CD4-positive, alpha-beta memory T cell (primary cell): ENCODE measurements at regions of chr11 and their contacts with region 1.

Region 1: DNA sequence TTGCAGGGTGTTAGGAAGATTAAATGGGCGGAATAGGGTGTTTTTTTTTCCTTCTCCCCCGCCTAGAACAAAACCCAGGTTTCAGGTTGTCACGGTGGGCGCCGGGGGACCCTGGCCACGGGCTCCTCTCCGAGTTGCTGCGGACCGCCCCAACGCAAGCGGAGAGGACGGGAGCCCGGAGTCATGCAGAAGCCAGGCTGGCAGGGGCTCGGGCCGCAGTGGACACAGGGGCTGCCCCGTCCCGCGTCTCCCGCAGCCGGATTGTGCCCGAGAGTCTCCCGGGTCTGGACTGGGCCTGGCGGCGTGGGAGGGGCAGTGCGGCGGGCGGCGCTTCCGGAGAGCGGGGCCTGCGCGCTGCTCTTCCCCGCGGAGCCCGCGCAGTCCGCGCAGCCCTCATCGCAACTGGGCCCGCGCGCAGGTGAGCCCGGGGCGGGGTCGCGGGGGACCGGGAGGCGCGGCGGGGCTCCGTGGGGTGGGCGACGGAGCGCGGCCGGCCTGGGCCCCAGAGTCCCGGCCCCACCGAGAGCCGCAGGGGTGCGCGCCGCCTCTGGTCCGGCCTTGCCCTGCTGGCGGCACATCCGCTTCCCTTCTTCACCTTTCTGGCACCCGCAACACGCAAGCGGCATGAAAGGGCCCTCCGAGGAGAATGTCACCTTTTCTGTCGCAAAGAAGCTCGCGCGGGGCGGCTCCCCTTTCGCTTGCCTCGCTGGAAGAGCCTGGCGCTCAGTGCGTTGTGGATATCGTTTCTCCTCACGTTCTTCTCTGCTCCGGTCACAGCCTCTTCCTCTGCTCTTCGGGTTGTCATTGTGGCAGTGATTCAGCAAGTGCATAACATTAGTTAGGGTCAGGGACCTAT is at the start of gene TIRAP:
- DNase-seq: peak; percentile 75 to 81 (median 77)
- H3K4me3 ChIP-seq: peak within 1 kb of the TSS; percentile 83 to 98
- H3K4me3 Mint-ChIP-seq: peak within 1 kb of the TSS; percentile 90 to 99 (median 96)
- H3K27ac ChIP-seq: peak within 1 kb of the TSS; percentile 77
- H3K27ac Mint-ChIP-seq: peak within 1 kb of the TSS; percentile 86 to 99 (median 98)
- H3K4me1 ChIP-seq: peaks cover 43% of the 10 kb centered on the region
- H3K4me1 Mint-ChIP-seq: peaks cover 30 to 63% (median 47%) of the 10 kb centered on the region in 4 donors
- H3K27me3 ChIP-seq: no peaks in the 10 kb centered on the region
- H3K27me3 Mint-ChIP-seq: no peaks in the 10 kb centered on the region
- total RNA-seq, gene TIRAP: 25.4 to 27.4 TPM

Region 2: DNA sequence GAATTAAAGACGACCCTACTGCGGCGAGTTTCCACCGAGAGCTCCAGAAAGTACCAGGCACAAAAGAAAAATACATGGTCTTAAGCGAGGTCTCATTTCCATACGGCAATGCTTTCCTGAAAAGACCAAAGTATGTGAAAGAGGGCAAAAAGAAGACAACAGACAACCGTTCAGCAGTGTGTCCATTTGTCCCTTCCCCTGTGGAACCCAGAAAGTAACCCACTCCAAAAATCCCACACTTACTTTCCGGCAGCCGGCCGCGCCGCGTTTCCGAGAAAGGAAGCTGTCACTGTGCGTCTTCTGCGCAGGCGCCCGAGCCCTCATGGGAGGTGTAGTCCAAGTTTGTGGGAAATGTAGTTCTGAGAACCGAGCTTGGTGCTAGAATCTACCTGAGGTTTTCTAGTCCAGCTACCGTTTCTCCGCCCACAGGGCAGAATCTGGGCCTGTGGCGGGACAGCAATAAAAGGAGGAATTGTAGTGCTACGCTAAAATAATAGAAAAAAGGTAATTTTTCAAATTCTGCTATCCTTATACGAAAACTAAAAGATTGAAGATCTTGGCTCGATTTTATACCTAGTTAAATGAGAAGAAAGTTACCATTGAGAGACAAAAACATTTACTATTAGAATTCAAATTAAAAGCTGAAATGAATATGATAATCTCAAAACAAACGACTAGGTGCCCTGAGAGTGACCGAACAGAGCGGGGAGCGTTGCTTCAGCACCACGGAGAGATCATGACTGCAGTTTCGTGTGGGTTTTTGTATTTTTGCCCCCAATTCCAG is 379.8 kb before region 1 on chr11 and contains the start of gene PUS3:
- CTCF ChIA-PET with region 1: no interaction called
- POLR2A ChIA-PET with region 1: no interaction called
- intact Hi-C with region 1: no loop called
- DNase-seq: peak; percentile 83 to 88 (median 84)
- H3K4me3 ChIP-seq: peak within 1 kb of the TSS; percentile 45 to 58
- H3K4me3 Mint-ChIP-seq: peak within 1 kb of the TSS; percentile 92 to 97 (median 95)
- H3K27ac ChIP-seq: peak within 1 kb of the TSS; percentile 81
- H3K27ac Mint-ChIP-seq: peak within 1 kb of the TSS; percentile 88 to 96 (median 92)
- H3K4me1 ChIP-seq: peaks cover 18% of the 10 kb centered on the region
- H3K4me1 Mint-ChIP-seq: peaks cover 20 to 49% (median 37%) of the 10 kb centered on the region in 4 donors
- H3K27me3 ChIP-seq: peaks cover 12% of the 10 kb centered on the region
- H3K27me3 Mint-ChIP-seq: peaks cover 19 to 22% of the 10 kb centered on the region in 2 donors
- total RNA-seq, gene PUS3: 12.4 to 12.6 TPM

Region 3: DNA sequence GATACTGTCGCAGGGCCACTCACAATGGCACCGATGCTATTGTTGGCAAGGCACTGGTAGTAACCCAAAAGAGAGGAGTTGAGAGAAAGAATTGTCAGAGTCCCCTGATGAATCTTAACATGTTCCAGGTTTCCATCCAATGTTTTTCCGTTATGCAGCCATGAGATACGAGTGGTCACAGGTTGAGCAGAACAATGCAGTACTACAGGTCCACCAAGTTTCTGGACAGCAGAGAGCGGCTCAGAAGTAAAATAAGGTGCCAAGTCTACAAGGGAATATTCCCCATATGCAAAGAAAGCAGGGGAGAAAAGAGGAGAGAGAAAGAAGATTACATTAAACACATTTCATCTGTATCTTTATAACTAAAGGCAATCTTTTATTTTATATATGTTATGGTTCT is 261.7 kb before region 1 on chr11:
- CTCF ChIA-PET with region 1: no interaction called
- POLR2A ChIA-PET with region 1: no interaction called
- intact Hi-C with region 1: no loop called
- DNase-seq: no peak
- H3K4me3 ChIP-seq: no peak overlapping the region
- H3K4me3 Mint-ChIP-seq: no peak overlapping the region
- H3K27ac ChIP-seq: no peak overlapping the region
- H3K27ac Mint-ChIP-seq: no peak overlapping the region
- H3K4me1 ChIP-seq: no peaks in the 10 kb centered on the region
- H3K4me1 Mint-ChIP-seq: no peaks in the 10 kb centered on the region
- H3K27me3 ChIP-seq: no peaks in the 10 kb centered on the region
- H3K27me3 Mint-ChIP-seq: no peaks in the 10 kb centered on the region

Region 4: DNA sequence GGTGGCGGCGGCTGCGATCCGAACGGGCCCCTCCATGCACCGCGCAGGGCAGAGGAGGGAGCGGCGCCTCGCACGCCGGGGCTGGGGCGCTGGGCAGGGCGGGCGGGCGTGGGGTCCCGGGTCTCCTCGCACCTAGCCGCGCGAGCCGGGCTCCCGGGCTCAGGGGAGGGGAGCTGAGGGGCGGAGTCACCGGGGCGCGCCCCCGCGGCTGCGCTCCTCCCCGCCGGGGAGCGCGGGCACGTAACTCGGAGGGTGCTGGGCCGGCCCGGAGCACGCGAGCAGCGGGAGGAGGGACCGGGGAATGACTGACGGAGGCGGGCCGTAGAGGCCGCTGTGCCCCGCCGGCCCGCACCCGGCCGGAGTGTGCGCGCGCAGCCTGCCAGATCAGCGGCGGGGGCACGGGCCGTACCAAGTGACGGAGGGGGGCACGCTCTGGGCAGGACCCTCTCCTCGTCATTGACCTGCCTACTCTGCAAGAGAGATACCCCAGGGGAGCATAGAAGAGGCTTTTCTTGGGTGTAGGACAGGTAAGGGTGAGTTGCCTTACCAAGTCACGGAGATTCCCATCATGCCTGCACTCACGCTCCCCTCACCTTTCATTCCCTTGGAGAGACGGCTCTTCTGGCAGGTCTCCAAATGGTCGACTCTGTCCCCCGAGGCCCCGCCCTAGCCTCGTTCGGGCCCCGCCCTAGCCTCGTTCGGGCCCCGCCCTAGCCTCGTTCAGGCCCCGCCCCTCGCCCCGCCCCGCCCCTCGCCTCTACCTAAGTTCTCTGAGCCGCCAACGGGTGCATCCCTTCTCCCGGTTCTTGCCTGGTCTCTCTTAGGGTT is 220.1 kb before region 1 on chr11 and contains the start of gene CDON:
- CTCF ChIA-PET with region 1: no interaction called
- POLR2A ChIA-PET with region 1: no interaction called
- intact Hi-C with region 1: loop called (anchors 10 kb)
- DNase-seq: peak; percentile 88 to 95 (median 93)
- H3K4me3 ChIP-seq: peak within 1 kb of the TSS; percentile 47 to 76
- H3K4me3 Mint-ChIP-seq: peak within 1 kb of the TSS; percentile 86 to 96 (median 90)
- H3K27ac ChIP-seq: peak within 1 kb of the TSS; percentile 73
- H3K27ac Mint-ChIP-seq: peak within 1 kb of the TSS; percentile 84 to 99 (median 96)
- H3K4me1 ChIP-seq: peaks cover 14% of the 10 kb centered on the region
- H3K4me1 Mint-ChIP-seq: peaks cover 5 to 14% (median 9%) of the 10 kb centered on the region in 4 donors
- H3K27me3 ChIP-seq: no peaks in the 10 kb centered on the region
- H3K27me3 Mint-ChIP-seq: peaks cover 0 to 2% of the 10 kb centered on the region in 2 donors
- total RNA-seq, gene CDON: 2.7 to 3.1 TPM

Region 5: GRCh38 chr11:126268708-126269579 is 14.0 kb before region 1 on chr11 and contains the starts of genes FOXRED1 and SRPRA:
- CTCF ChIA-PET with region 1: interaction called, 8 read pairs
- POLR2A ChIA-PET with region 1: interaction called, 101 read pairs
- intact Hi-C with region 1: loop called (anchors 1 kb)
- DNase-seq: peak; percentile 100
- H3K4me3 ChIP-seq: peak within 1 kb of the TSS; percentile 84 to 96
- H3K4me3 Mint-ChIP-seq: peak within 1 kb of the TSS; percentile 95 to 99 (median 96)
- H3K27ac ChIP-seq: peak within 1 kb of the TSS; percentile 83
- H3K27ac Mint-ChIP-seq: peak within 1 kb of the TSS; percentile 94 to 99 (median 99)
- H3K4me1 ChIP-seq: peaks cover 26% of the 10 kb centered on the region
- H3K4me1 Mint-ChIP-seq: peaks cover 19 to 43% (median 24%) of the 10 kb centered on the region in 4 donors
- H3K27me3 ChIP-seq: no peaks in the 10 kb centered on the region
- H3K27me3 Mint-ChIP-seq: no peaks in the 10 kb centered on the region
- total RNA-seq, gene FOXRED1: 30.5 to 32.5 TPM
- total RNA-seq, gene SRPRA: 171 to 176 TPM

Region 6: DNA sequence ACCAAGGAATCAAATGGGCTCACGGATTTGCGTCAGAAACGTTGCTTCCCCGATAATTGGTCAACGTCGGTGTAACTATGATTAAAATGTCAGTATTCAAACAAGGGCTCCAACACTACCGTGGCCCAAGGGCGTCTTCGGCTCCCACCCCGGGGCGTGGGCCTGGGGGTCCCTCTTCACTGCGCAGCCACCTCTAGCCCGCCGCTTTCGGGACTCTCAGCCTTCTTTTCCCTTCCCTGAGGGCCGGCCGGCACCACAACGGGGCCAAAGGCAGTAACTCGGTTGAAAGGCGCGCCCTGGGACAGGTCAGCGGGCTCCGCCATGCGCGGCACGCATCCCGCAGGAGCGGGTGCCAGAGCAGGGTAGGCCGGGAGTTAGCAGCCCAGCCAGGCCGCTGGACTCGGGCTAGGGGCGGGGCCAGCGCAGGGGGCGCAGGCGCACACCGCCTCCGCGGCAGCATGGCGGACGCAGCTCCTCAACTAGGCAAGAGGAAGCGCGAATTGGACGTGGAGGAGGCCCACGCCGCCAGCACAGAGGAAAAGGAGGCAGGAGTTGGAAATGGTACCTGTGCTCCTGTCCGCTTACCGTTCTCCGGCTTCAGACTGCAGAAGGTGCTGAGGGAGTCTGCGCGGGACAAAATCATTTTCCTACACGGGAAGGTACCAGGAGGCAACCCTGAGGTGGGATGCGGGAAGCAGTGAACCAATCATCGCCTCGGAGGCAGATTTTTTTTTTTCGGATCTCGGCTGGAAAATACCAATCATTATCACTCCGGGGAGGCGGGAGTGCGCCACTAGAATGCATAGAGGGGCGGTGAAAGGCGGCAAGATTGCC is 20.9 kb after region 1 on chr11 and contains the start of gene DCPS:
- CTCF ChIA-PET with region 1: interaction called, 7 read pairs
- POLR2A ChIA-PET with region 1: interaction called, 13 read pairs
- intact Hi-C with region 1: loop called (anchors 1 kb)
- DNase-seq: peak; percentile 84 to 89 (median 86)
- H3K4me3 ChIP-seq: peak within 1 kb of the TSS; percentile 66 to 90
- H3K4me3 Mint-ChIP-seq: peak within 1 kb of the TSS; percentile 86 to 99 (median 92)
- H3K27ac ChIP-seq: peak within 1 kb of the TSS; percentile 91
- H3K27ac Mint-ChIP-seq: peak within 1 kb of the TSS; percentile 85 to 99 (median 94)
- H3K4me1 ChIP-seq: peaks cover 26% of the 10 kb centered on the region
- H3K4me1 Mint-ChIP-seq: peaks cover 21 to 47% (median 34%) of the 10 kb centered on the region in 4 donors
- H3K27me3 ChIP-seq: no peaks in the 10 kb centered on the region
- H3K27me3 Mint-ChIP-seq: no peaks in the 10 kb centered on the region
- total RNA-seq, gene DCPS: 20.2 to 21.2 TPM

Region 7: GRCh38 chr11:126669416-126669815 is 386.5 kb after region 1 on chr11:
- CTCF ChIA-PET with region 1: no interaction called
- POLR2A ChIA-PET with region 1: no interaction called
- intact Hi-C with region 1: no loop called
- DNase-seq: no peak
- H3K4me3 ChIP-seq: no peak overlapping the region
- H3K4me3 Mint-ChIP-seq: no peak overlapping the region
- H3K27ac ChIP-seq: no peak overlapping the region
- H3K27ac Mint-ChIP-seq: no peak overlapping the region
- H3K4me1 ChIP-seq: no peaks in the 10 kb centered on the region
- H3K4me1 Mint-ChIP-seq: no peaks in the 10 kb centered on the region
- H3K27me3 ChIP-seq: no peaks in the 10 kb centered on the region
- H3K27me3 Mint-ChIP-seq: peaks cover 9 to 14% of the 10 kb centered on the region in 2 donors